GM12878 (cell line): ENCODE measurements at regions of chr7 and their contacts with region 1.

Region 1: GRCh38 chr7:74206589-74207120 is 3.2 kb upstream of the LAT2 start:
- DNase-seq: no peak
- ATAC-seq: peak; percentile 35
- H3K4me3 ChIP-seq: peak overlapping the region; percentile 44; the same call in 1 of the 2 replicates
- H3K27ac ChIP-seq: 0 out of 2 replicates have a peak overlapping the region, but pooled peaks have one; percentile 7
- H3K4me1 ChIP-seq: peaks cover 36% of the 10 kb centered on the region
- H3K27me3 ChIP-seq: no peaks in the 10 kb centered on the region
- CTCF ChIP-seq: peak; percentile 93 to 95 (median 93)
- EP300 ChIP-seq: no peak
- POLR2A ChIP-seq: no peak
- RAD21 ChIP-seq: peak; percentile 86

Region 2: DNA sequence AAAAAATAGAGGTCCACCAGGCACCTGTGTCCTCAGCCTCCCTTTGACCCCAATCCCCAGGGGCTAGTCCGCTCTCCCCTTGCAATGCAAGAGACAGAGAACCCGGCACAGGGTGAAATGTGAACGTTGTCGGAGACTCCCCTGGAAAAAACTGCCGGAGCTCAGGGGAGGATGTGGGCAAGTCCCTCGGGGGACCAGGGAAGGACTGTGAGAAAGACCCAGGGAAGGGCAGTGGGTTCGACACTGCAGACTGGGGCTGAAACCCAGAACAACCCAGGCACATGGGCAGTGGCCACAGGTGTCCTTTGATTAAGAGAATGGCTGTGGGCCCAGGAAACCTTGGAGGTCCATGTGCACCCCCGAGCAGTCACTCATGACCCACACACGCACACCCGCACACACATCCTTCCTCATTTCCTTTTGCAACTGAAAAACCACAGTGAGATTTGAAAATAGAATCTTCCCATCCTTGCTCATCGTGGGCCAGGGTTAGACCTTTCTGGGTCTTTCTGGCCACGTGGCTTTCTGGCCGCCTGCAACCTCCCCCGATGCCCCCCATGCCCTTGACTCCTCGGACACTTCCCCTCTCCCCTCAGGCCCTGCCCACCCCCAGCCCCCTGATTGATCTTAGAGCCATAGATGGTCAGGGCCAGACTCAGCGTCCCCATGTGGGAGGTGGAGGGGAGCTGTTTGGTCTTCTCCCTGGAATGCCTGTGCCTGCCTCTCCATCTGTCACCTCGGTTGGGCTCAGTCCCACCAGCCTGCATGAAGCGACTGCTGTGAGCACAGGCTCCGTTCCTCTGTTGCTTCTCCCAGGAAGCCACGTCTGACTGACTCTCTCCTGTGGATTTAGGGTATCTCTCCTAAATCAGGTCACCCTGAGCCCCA is 11.0 kb after region 1 on chr7:
- CTCF ChIA-PET with region 1: interaction called, 17 read pairs
- POLR2A ChIA-PET with region 1: interaction called, 18 read pairs
- RAD21 ChIA-PET with region 1: interaction called, 20 read pairs
- SMC1A ChIA-PET with region 1: interaction called, 12 read pairs
- in situ Hi-C with region 1: no loop called
- intact Hi-C with region 1: no loop called
- DNase-seq: peak; percentile 81
- ATAC-seq: peak; percentile 63
- H3K4me3 ChIP-seq: no peak overlapping the region
- H3K27ac ChIP-seq: peak overlapping the region; percentile 95
- H3K4me1 ChIP-seq: peaks cover 42% of the 10 kb centered on the region
- H3K27me3 ChIP-seq: no peaks in the 10 kb centered on the region
- CTCF ChIP-seq: no peak
- EP300 ChIP-seq: peak; percentile 51 to 82; a peak in 3 of 4 replicates
- POLR2A ChIP-seq: peak; percentile 58
- RAD21 ChIP-seq: no peak

Region 3: GRCh38 chr7:74254129-74254857 is 47.6 kb after region 1 on chr7 and contains the start of gene RFC2:
- CTCF ChIA-PET with region 1: interaction called, 13 read pairs
- POLR2A ChIA-PET with region 1: interaction called, 7 read pairs
- RAD21 ChIA-PET with region 1: interaction called, 9 read pairs
- SMC1A ChIA-PET with region 1: interaction called, 9 read pairs
- in situ Hi-C with region 1: no loop called
- intact Hi-C with region 1: no loop called
- DNase-seq: peak; percentile 96
- ATAC-seq: peak; percentile 94
- H3K4me3 ChIP-seq: peak within 1 kb of the TSS; percentile 86
- H3K27ac ChIP-seq: peak within 1 kb of the TSS; percentile 88
- H3K4me1 ChIP-seq: peaks cover 33% of the 10 kb centered on the region
- H3K27me3 ChIP-seq: no peaks in the 10 kb centered on the region
- CTCF ChIP-seq: peak in 1 of 3 experiments; percentile 17; a peak in 1 of 6 replicates
- EP300 ChIP-seq: peak; percentile 19 to 45; a peak in 2 of 4 replicates
- POLR2A ChIP-seq: peak; percentile 96
- RAD21 ChIP-seq: no peak
- polyA plus RNA-seq, gene RFC2: 25.8 to 45.2 TPM

Region 4: GRCh38 chr7:74281030-74281429 is 74.4 kb after region 1 on chr7:
- CTCF ChIA-PET with region 1: interaction called, 28 read pairs
- POLR2A ChIA-PET with region 1: interaction called, 14 read pairs
- RAD21 ChIA-PET with region 1: interaction called, 36 read pairs
- SMC1A ChIA-PET with region 1: interaction called, 17 read pairs
- in situ Hi-C with region 1: loop called (anchors 5 kb)
- intact Hi-C with region 1: loop called (anchors 5 kb)
- DNase-seq: no peak
- ATAC-seq: no peak
- H3K4me3 ChIP-seq: no peak overlapping the region
- H3K27ac ChIP-seq: no peak overlapping the region
- H3K4me1 ChIP-seq: peaks cover 33% of the 10 kb centered on the region
- H3K27me3 ChIP-seq: no peaks in the 10 kb centered on the region
- CTCF ChIP-seq: no peak
- EP300 ChIP-seq: no peak
- POLR2A ChIP-seq: no peak
- RAD21 ChIP-seq: no peak

Region 5: GRCh38 chr7:74388880-74389415 is 182.3 kb after region 1 on chr7:
- CTCF ChIA-PET with region 1: interaction called, 21 read pairs
- POLR2A ChIA-PET with region 1: interaction called, 3 read pairs
- RAD21 ChIA-PET with region 1: interaction called, 10 read pairs
- SMC1A ChIA-PET with region 1: interaction called, 16 read pairs
- in situ Hi-C with region 1: no loop called
- intact Hi-C with region 1: no loop called
- DNase-seq: no peak
- ATAC-seq: no peak
- H3K4me3 ChIP-seq: no peak overlapping the region
- H3K27ac ChIP-seq: no peak overlapping the region
- H3K4me1 ChIP-seq: no peaks in the 10 kb centered on the region
- H3K27me3 ChIP-seq: no peaks in the 10 kb centered on the region
- CTCF ChIP-seq: no peak
- EP300 ChIP-seq: no peak
- POLR2A ChIP-seq: no peak
- RAD21 ChIP-seq: no peak